B cell (primary cell): ENCODE measurements at regions of chr5 and their contacts with region 1.

Region 1: DNA sequence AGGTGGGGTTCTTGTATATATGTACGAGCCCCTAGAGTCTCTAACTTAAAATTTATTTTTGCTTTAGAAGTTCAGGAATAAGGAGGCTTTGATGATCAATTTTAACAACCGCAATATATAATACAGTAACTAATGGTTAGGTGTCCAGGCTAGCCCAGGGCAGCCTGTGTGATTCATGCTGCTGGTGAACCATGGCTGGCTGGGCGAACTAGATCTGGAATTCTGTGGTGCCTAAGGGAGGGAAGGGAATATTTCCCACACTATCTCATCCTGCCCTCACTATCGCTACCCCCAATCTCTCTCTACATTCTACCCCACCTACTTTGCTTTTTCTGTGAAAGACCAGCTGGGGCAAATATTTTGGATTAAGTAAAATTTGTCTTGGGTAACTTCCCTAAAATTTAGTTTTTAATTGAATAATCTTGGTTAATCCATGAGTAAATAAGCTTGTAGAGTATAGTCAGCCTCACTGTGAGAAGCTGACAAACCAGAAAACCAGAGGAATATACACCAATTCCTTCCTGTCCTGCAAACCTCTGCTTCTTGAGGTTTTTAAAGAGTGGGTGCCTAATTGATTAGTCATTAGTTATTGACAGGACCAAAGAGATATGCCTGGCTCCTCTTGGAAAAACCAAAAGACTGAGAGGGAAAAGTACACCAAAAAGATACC is 115.1 kb upstream of the CCDC152 start:
- DNase-seq: no peak
- ATAC-seq: no peak
- H3K4me3 ChIP-seq: no peak overlapping the region
- H3K4me3 Mint-ChIP-seq: no peak overlapping the region
- H3K27ac ChIP-seq: no peak overlapping the region
- H3K27ac Mint-ChIP-seq: no peak overlapping the region
- H3K4me1 ChIP-seq: no peaks in the 10 kb centered on the region
- H3K4me1 Mint-ChIP-seq: peaks cover 1% of the 10 kb centered on the region
- H3K27me3 ChIP-seq: peaks cover 0 to 5% (median 2%) of the 10 kb centered on the region in 4 experiments
- H3K27me3 Mint-ChIP-seq: peaks cover 20% of the 10 kb centered on the region
- CTCF ChIP-seq: no peak

Region 2: GRCh38 chr5:42366051-42366450 is 275.4 kb before region 1 on chr5:
- CTCF ChIA-PET with region 1: no interaction called
- POLR2A ChIA-PET with region 1: no interaction called
- intact Hi-C with region 1: no loop called
- DNase-seq: no peak
- ATAC-seq: no peak
- H3K4me3 ChIP-seq: no peak overlapping the region
- H3K4me3 Mint-ChIP-seq: no peak overlapping the region
- H3K27ac ChIP-seq: no peak overlapping the region
- H3K27ac Mint-ChIP-seq: no peak overlapping the region
- H3K4me1 ChIP-seq: no peaks in the 10 kb centered on the region
- H3K4me1 Mint-ChIP-seq: no peaks in the 10 kb centered on the region
- H3K27me3 ChIP-seq: no peaks in the 10 kb centered on the region
- H3K27me3 Mint-ChIP-seq: no peaks in the 10 kb centered on the region
- CTCF ChIP-seq: no peak

Region 3: DNA sequence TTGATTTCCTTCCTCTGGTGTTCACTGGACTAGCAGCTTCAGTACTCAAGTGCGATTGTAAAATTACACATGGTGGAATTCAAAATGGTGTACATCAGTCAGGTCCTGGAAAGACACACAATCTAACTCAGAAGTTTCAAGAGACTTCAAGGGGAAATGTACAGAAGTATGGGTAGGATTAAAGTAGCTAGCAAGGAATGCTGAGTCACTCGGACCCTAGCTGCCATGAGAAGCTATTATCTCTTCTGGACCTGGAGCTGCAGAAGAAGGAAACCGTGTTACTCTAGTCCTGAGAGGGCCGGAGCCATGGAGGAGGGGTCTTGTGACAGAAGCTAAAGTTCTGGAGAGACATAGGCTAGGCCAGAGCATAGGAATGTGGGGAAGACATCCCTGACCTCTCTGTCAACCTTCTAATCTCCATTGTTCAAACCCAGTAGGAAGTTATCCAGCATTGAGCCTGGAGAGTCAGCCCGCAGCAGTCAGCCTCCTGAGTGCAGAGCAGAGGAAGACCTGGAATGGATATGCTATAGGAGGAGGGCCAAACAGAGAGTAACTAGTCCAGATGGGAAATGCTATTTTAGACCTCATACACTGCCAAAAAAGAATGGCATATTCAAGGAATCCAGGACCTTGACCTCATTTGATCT is 133.9 kb before region 1 on chr5:
- CTCF ChIA-PET with region 1: no interaction called
- POLR2A ChIA-PET with region 1: no interaction called
- intact Hi-C with region 1: no loop called
- DNase-seq: no peak
- ATAC-seq: no peak
- H3K4me3 ChIP-seq: no peak overlapping the region
- H3K4me3 Mint-ChIP-seq: no peak overlapping the region
- H3K27ac ChIP-seq: no peak overlapping the region
- H3K27ac Mint-ChIP-seq: no peak overlapping the region
- H3K4me1 ChIP-seq: no peaks in the 10 kb centered on the region
- H3K4me1 Mint-ChIP-seq: no peaks in the 10 kb centered on the region
- H3K27me3 ChIP-seq: no peaks in the 10 kb centered on the region
- H3K27me3 Mint-ChIP-seq: no peaks in the 10 kb centered on the region
- CTCF ChIP-seq: no peak

Region 4: DNA sequence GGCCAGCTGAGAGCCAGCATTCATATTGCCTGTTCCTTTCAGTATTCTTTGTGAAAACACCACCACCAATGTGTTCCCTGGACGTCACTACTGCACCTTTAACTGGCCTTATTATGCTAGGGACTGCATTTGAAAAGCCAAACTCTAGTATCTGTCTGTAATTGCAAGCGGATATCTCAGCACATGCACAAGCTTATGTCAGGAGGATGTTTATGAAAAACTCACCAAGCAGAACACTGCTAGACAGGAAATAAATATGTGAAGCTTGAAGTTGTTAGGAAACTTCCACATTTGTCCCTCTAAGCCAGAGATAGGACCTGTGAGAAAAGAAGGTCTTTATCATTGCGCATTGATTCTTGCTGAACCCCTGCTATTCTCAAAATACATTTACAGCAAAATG is 20.2 kb before region 1 on chr5:
- CTCF ChIA-PET with region 1: interaction called, 7 read pairs
- POLR2A ChIA-PET with region 1: no interaction called
- intact Hi-C with region 1: loop called (anchors 2 kb)
- DNase-seq: peak; percentile 74
- ATAC-seq: peak; percentile 94
- H3K4me3 ChIP-seq: peak overlapping the region in 1 of 5 experiments; percentile 26
- H3K4me3 Mint-ChIP-seq: peak overlapping the region; percentile 62
- H3K27ac ChIP-seq: peak overlapping the region; percentile 93 to 97
- H3K27ac Mint-ChIP-seq: peak overlapping the region; percentile 94
- H3K4me1 ChIP-seq: peaks cover 40 to 43% of the 10 kb centered on the region in 2 donors
- H3K4me1 Mint-ChIP-seq: peaks cover 50% of the 10 kb centered on the region
- H3K27me3 ChIP-seq: no peaks in the 10 kb centered on the region
- H3K27me3 Mint-ChIP-seq: peaks cover under 1% of the 10 kb centered on the region
- CTCF ChIP-seq: no peak

Region 5: DNA sequence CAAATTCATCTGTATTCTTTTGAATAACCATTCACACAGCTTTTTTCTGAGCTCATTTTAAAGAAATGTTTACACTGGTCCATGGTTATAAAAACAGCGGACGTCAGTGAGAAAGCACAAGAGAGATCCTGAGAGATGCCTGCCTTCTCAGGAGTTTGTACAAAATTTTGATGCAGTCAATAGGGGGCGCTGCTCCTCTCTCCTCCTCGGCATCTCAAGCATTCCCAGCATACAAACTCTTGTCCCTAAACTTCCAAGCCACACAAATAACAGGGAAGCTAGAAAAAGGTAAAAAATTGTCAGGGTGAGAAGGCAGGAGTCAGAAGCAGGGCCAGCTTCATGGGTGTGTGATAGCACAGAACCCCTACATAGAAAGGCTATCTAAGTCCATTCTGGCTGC is 104.0 kb after region 1 on chr5:
- CTCF ChIA-PET with region 1: no interaction called
- POLR2A ChIA-PET with region 1: no interaction called
- intact Hi-C with region 1: no loop called
- DNase-seq: no peak
- ATAC-seq: no peak
- H3K4me3 ChIP-seq: no peak overlapping the region
- H3K4me3 Mint-ChIP-seq: no peak overlapping the region
- H3K27ac ChIP-seq: no peak overlapping the region
- H3K27ac Mint-ChIP-seq: no peak overlapping the region
- H3K4me1 ChIP-seq: no peaks in the 10 kb centered on the region
- H3K4me1 Mint-ChIP-seq: no peaks in the 10 kb centered on the region
- H3K27me3 ChIP-seq: no peaks in the 10 kb centered on the region
- H3K27me3 Mint-ChIP-seq: no peaks in the 10 kb centered on the region
- CTCF ChIP-seq: no peak